PC-3 (cell line): ENCODE measurements at regions of chr4 and their contacts with region 1.

Region 1: GRCh38 chr4:59818656-59819055 is 1381.5 kb upstream of the ADGRL3 start:
- DNase-seq: peak; percentile 46
- ATAC-seq: peak; percentile 80
- H3K4me3 ChIP-seq: peak overlapping the region; percentile 74
- H3K27ac ChIP-seq: no peak overlapping the region
- H3K4me1 ChIP-seq: no peaks in the 10 kb centered on the region
- H3K27me3 ChIP-seq: no peaks in the 10 kb centered on the region
- CTCF ChIP-seq: no peak

Region 2: DNA sequence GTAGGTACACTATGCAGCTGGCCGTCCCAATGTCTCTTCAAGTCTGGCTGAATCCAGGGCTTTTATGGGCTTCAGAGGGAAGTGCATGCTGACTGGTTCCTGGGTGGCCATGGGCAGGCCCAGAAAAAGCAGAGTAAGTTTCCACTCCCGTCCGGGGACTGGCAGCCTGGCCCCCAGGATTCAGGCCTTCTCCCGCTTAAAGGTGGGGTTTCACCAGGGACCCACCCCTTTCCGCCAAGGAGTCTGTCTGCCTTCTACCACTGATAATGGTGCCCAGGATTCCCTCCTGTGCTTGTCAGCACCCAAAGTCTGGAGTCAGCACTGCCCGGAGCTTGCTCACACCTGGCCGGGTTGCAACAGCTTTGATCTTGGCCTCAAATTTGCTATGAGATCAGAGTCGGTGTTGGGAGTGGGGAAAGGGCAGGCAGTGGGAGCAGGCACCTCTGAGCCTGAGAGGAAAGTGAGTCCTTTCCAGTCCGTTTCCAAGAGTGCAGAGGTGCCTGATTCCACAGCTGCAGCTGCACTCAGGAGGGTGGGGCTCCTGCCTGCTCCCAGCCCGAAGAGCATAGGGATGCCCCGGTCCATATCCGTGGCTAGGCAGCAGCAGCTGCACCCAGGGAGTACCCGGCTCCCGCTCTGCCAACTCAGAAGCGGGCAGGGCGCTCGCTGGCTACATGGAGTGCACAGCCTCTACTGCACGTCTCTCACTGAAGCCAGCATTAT is 37.1 kb after region 1 on chr4:
- CTCF ChIA-PET with region 1: no interaction called
- POLR2A ChIA-PET with region 1: no interaction called
- intact Hi-C with region 1: no loop called
- DNase-seq: no peak
- ATAC-seq: no peak
- H3K4me3 ChIP-seq: no peak overlapping the region
- H3K27ac ChIP-seq: no peak overlapping the region
- H3K4me1 ChIP-seq: no peaks in the 10 kb centered on the region
- H3K27me3 ChIP-seq: no peaks in the 10 kb centered on the region
- CTCF ChIP-seq: no peak

Region 3: DNA sequence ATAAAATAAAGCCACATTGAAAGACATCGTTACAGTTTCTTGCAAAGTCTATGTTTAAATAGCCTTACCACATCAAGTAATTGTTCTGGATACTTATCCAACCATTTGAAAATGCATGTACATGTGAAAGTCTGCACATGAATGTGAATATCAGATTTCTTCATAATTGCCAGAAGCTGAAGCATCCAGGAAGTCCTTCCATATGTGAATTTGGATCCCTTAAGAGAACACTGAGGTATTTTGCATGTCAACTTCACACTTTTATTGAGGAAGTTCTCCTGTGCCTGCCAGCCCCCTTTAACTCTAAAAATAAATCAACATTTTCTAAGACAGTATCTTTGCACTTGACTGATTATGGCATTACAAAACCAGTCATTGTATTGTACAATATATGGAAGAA is 278.0 kb after region 1 on chr4:
- CTCF ChIA-PET with region 1: no interaction called
- POLR2A ChIA-PET with region 1: no interaction called
- intact Hi-C with region 1: no loop called
- DNase-seq: no peak
- ATAC-seq: no peak
- H3K4me3 ChIP-seq: no peak overlapping the region
- H3K27ac ChIP-seq: no peak overlapping the region
- H3K4me1 ChIP-seq: no peaks in the 10 kb centered on the region
- H3K27me3 ChIP-seq: no peaks in the 10 kb centered on the region
- CTCF ChIP-seq: no peak

Region 4: GRCh38 chr4:60195256-60195655 is 376.6 kb after region 1 on chr4:
- CTCF ChIA-PET with region 1: no interaction called
- POLR2A ChIA-PET with region 1: no interaction called
- intact Hi-C with region 1: loop called (anchors 5 kb)
- DNase-seq: no peak
- ATAC-seq: no peak
- H3K4me3 ChIP-seq: no peak overlapping the region
- H3K27ac ChIP-seq: no peak overlapping the region
- H3K4me1 ChIP-seq: no peaks in the 10 kb centered on the region
- H3K27me3 ChIP-seq: no peaks in the 10 kb centered on the region
- CTCF ChIP-seq: no peak